PC-3 (cell line): ENCODE measurements at regions of chr15 and their contacts with region 1.

Region 1: GRCh38 chr15:52139599-52140491 is 27.3 kb upstream of the BCL2L10 start:
- DNase-seq: peak; percentile 79
- ATAC-seq: peak; percentile 42
- H3K4me3 ChIP-seq: no peak overlapping the region
- H3K27ac ChIP-seq: no peak overlapping the region
- H3K4me1 ChIP-seq: peaks cover 15% of the 10 kb centered on the region
- H3K27me3 ChIP-seq: no peaks in the 10 kb centered on the region
- CTCF ChIP-seq: peak; percentile 85

Region 2: DNA sequence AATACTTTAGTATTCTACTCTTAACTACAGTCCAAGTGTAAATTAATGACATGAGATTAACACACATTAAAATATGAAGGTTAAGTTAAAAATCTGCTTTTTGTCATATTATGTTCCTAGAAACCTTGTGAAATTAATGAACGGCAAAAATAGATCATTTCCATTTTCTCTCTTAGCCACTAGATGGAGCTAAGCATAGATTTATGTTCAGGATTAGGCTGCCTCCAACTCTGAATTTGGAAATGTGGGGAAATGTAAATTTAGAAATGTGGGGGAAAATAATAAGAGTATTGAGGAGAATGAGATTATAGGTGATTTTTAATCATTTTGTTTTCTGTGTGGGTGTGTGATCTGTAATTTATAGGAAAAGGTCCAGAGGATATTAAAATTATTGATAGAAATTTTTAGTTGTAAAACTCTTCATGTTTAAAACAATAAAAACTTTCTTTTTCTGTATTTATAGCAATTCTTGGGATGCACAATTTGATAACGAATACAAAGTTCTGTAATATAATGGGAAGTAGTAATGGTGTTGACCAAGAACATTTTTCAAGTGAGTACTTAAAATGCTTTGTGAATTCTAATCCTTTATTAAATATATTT is 251.2 kb before region 1 on chr15:
- CTCF ChIA-PET with region 1: no interaction called
- POLR2A ChIA-PET with region 1: no interaction called
- intact Hi-C with region 1: no loop called
- DNase-seq: peak; percentile 57
- ATAC-seq: no peak; the same call in 1 of the 2 replicates
- H3K4me3 ChIP-seq: no peak overlapping the region
- H3K27ac ChIP-seq: 0 out of 2 replicates have a peak overlapping the region, but pooled peaks have one; percentile 12
- H3K4me1 ChIP-seq: peaks cover 17% of the 10 kb centered on the region
- H3K27me3 ChIP-seq: no peaks in the 10 kb centered on the region
- CTCF ChIP-seq: peak; percentile 83

Region 3: DNA sequence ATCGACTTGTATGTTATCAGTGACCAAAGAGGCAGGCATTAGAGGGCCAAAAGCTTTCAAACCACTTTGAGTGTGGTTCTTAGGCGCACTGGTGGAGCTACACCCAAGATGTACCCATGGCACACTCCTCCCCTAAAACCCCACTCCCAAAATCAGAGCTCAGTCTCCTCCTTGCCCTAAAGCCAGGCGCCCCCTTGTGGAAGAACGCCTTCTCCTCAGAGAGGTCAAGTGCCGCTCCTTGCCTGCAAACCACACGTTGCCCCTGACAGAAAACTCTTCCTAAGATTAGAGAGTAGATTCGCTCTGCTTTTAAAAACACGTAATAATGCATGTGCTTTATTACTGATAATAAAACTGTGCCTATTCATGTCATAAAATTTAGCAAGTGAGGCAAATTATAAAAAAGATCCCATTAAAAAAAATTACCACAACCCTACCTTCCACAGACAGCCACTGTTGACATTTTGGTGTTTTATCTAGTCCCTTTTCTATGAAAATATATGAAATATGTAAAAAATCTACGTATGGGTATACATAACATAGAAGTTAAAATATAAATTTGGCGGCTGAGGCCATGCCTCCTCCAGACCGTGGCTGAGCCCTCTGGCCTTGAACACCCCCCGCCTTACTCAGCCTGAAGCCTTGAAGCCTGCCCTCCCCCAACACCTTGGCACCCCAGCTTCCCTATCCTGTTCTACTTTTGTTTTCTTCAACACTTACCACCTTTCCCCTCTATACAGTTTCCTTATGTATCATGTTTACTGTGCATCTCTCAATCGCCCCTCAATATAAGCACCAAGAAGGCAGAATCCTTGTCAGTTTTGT is 60.8 kb before region 1 on chr15:
- CTCF ChIA-PET with region 1: interaction called, 8 read pairs
- POLR2A ChIA-PET with region 1: interaction called, 3 read pairs
- intact Hi-C with region 1: loop called (anchors 2 kb)
- DNase-seq: peak; percentile 68
- ATAC-seq: peak; percentile 60
- H3K4me3 ChIP-seq: no peak overlapping the region
- H3K27ac ChIP-seq: no peak overlapping the region
- H3K4me1 ChIP-seq: peaks cover 22% of the 10 kb centered on the region
- H3K27me3 ChIP-seq: no peaks in the 10 kb centered on the region
- CTCF ChIP-seq: peak; percentile 85

Region 4: DNA sequence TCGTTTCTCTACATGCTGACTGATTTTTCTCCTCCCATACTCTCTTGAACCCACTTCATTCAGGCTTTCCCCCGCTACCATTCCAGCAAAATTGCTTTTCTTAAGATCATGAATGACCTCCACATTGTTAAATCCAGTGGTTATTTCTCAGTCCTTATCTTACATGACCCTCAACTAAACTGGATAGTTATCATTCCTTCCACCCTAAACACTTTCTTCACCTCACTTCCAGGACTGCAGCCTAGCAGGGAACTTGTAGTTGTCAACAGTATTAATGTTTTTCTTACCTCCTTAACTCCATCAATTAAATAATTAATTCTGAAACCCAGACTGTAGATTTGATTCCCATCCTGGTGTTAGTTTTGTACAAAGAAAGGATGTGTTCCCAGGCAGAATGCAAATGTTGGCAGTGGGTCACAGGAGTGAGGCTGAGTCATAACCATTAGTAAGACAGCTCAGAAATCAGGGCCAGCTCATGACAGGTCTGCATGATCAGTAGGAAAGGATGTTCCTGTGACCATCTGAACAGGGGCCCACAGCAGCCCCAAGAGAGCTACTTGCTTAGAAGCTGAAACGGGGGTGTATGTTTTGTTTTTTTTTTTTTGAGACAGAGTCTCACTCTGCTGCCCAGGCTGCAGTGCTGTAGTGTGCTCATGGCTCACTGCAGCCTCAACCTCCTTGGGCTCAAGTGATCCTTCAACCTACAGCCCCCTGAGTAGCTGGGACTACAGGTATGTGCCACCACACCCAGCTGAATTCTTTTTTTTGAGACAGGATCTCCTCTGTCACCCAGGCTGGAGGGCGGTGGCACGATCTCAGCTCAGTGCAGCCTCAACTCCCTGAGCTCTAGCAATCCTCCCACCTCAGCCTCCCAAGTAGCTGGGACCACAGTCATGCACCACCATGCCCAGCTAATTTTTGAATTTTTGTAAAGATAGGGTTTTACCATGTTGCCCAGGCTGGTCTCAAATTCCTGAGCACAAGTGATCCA is 36.3 kb before region 1 on chr15:
- CTCF ChIA-PET with region 1: no interaction called
- POLR2A ChIA-PET with region 1: no interaction called
- intact Hi-C with region 1: loop called (anchors 5 kb)
- DNase-seq: peak; percentile 87
- ATAC-seq: peak; percentile 98
- H3K4me3 ChIP-seq: no peak overlapping the region
- H3K27ac ChIP-seq: peak overlapping the region; percentile 96
- H3K4me1 ChIP-seq: peaks cover 26% of the 10 kb centered on the region
- H3K27me3 ChIP-seq: no peaks in the 10 kb centered on the region
- CTCF ChIP-seq: no peak

Region 5: GRCh38 chr15:52546031-52546751 is 406.3 kb after region 1 on chr15:
- CTCF ChIA-PET with region 1: no interaction called
- POLR2A ChIA-PET with region 1: no interaction called
- intact Hi-C with region 1: no loop called
- DNase-seq: no peak
- ATAC-seq: peak; percentile 33; the same call in 1 of the 2 replicates
- H3K4me3 ChIP-seq: no peak overlapping the region
- H3K27ac ChIP-seq: no peak overlapping the region
- H3K4me1 ChIP-seq: no peaks in the 10 kb centered on the region
- H3K27me3 ChIP-seq: no peaks in the 10 kb centered on the region
- CTCF ChIP-seq: no peak